ENCODE measurements at regions of chr11 and their contacts with region 1.

Region 1: DNA sequence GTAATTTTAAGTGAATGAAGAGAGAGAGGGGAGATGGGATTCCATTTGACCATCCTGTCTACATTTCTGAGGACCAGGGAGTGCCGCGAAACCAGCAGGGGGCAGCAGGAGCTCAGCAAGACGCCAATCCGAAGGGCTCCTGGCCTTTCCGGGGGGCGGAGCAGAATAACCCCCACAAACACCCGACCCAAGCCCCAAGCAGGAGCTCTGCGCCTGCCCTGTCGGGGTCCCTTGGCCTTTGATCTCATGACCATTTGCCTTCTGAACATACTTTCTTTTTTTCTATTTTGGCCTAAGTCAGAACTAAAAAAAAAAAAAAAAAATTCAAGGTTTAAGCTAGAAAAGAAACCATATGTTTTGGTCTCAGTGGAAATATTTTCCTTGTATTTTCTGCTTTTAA is 21.9 kb upstream of the SCN2B start:
- DNase-seq: peak; percentile 68 to 89 (median 88)
- ATAC-seq: peak; percentile 18
- H3K4me3 ChIP-seq: no peak overlapping the region
- H3K4me3 Mint-ChIP-seq: peak overlapping the region; percentile 27
- H3K27ac ChIP-seq: no peak overlapping the region
- H3K27ac Mint-ChIP-seq: peak overlapping the region; percentile 81
- H3K4me1 ChIP-seq: peaks cover 46% of the 10 kb centered on the region
- H3K4me1 Mint-ChIP-seq: peaks cover 11% of the 10 kb centered on the region
- H3K27me3 ChIP-seq: no peaks in the 10 kb centered on the region
- H3K27me3 Mint-ChIP-seq: no peaks in the 10 kb centered on the region
- CTCF ChIP-seq: peak; percentile 95

Region 2: GRCh38 chr11:118186346-118187107 is 11.8 kb before region 1 on chr11:
- CTCF ChIA-PET with region 1: interaction called, 15 read pairs
- POLR2A ChIA-PET with region 1: no interaction called
- intact Hi-C with region 1: no loop called
- DNase-seq: no peak
- ATAC-seq: no peak
- H3K4me3 ChIP-seq: no peak overlapping the region
- H3K4me3 Mint-ChIP-seq: no peak overlapping the region
- H3K27ac ChIP-seq: no peak overlapping the region
- H3K27ac Mint-ChIP-seq: no peak overlapping the region
- H3K4me1 ChIP-seq: no peaks in the 10 kb centered on the region
- H3K4me1 Mint-ChIP-seq: no peaks in the 10 kb centered on the region
- H3K27me3 ChIP-seq: peaks cover 0 to 2% of the 10 kb centered on the region in 2 experiments
- H3K27me3 Mint-ChIP-seq: peaks cover 16% of the 10 kb centered on the region
- CTCF ChIP-seq: no peak

Region 3: GRCh38 chr11:118240999-118241768 is 42.8 kb after region 1 on chr11:
- CTCF ChIA-PET with region 1: interaction called, 25 read pairs
- POLR2A ChIA-PET with region 1: interaction called, 8 read pairs
- intact Hi-C with region 1: loop called in 1 of 2 experiments (anchors 2 kb)
- DNase-seq: peak in 8 of 9 experiments; percentile 36 to 89 (median 69)
- ATAC-seq: peak; percentile 92
- H3K4me3 ChIP-seq: peak overlapping the region in 1 of 2 experiments; percentile 2
- H3K4me3 Mint-ChIP-seq: peak overlapping the region; percentile 56
- H3K27ac ChIP-seq: peak overlapping the region; percentile 22 to 74
- H3K27ac Mint-ChIP-seq: peak overlapping the region; percentile 85
- H3K4me1 ChIP-seq: peaks cover 35% of the 10 kb centered on the region
- H3K4me1 Mint-ChIP-seq: peaks cover 72% of the 10 kb centered on the region
- H3K27me3 ChIP-seq: no peaks in the 10 kb centered on the region
- H3K27me3 Mint-ChIP-seq: no peaks in the 10 kb centered on the region
- CTCF ChIP-seq: no peak

Region 4: DNA sequence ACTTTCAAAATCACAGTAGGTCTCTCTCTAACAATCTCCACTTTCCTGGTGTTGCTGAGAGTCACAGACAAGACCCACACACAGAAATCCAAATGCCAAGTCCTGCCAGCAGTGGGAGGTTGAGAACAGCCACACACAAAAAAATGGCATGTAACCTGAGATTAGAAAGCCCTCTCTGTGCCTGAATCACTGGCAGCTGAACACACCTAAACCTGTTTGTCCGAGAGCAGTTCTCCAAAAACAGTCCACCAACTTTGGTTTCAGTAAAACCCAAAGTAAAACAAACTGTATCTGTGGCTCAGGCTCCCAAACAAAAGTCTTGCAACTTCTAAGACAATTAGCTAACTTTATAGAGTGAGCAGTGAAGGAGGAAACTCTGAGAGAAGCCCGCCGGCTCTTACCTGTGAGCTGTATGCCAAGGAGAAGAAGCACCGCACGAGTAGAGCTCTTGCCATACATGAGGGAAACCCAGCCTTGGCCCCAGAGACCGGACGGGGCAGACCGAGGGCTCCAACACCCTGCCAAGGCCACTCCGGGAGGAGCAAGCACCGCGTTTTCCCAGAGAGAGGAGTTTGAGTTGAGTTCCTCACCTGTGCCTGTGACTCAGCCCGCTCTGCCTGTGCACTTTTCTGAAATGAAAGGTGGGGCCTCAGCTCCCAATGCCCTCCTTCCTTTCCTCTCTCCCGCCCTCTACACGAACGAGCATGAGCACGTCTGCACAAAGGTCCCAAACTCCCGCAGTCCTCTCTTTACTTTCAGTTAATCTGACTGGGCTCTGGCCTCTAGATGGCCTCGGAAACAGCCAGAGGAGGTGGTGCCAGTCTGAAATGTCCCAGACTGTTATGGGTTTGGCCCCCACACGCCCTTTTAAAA is 65.6 kb after region 1 on chr11 and contains the start of gene MPZL2:
- CTCF ChIA-PET with region 1: interaction called, 21 read pairs
- POLR2A ChIA-PET with region 1: interaction called, 5 read pairs
- intact Hi-C with region 1: loop called in 1 of 2 experiments (anchors 2 kb)
- DNase-seq: peak in 3 of 9 experiments; percentile 35 to 61 (median 40)
- ATAC-seq: peak; percentile 54
- H3K4me3 ChIP-seq: peak within 1 kb of the TSS; percentile 4 to 58
- H3K4me3 Mint-ChIP-seq: peak within 1 kb of the TSS; percentile 82
- H3K27ac ChIP-seq: no peak within 1 kb of the TSS
- H3K27ac Mint-ChIP-seq: peak within 1 kb of the TSS; percentile 83
- H3K4me1 ChIP-seq: peaks cover 38% of the 10 kb centered on the region
- H3K4me1 Mint-ChIP-seq: peaks cover 44% of the 10 kb centered on the region
- H3K27me3 ChIP-seq: no peaks in the 10 kb centered on the region
- H3K27me3 Mint-ChIP-seq: no peaks in the 10 kb centered on the region
- CTCF ChIP-seq: no peak
- total RNA-seq, gene MPZL2: 1.2 to 1.4 TPM

Region 5: DNA sequence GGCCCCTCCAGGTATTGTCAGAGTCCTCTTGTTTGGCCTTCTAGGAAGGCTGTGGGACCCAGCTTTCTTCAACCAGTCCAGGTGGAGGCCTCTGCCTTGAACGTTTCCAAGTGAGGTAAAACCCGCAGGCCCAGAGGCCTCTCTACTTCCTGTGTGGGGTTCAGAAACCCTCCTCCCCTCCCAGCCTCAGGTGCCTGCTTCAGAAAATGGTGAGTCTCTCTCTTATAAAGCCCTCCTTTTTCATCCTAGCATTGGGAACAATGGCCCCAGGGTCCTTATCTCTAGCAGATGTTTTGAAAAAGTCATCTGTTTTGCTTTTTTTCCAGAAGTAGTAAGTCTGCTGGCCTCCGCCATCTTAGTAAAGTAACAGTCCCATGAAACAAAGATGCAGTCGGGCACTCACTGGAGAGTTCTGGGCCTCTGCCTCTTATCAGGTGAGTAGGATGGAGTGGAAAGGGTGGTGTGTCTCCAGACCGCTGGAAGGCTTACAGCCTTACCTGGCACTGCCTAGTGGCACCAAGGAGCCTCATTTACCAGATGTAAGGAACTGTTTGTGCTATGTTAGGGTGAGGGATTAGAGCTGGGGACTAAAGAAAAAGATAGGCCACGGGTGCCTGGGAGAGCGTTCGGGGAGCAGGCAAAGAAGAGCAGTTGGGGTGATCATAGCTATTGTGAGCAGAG is 106.3 kb after region 1 on chr11 and contains the start of gene CD3E:
- CTCF ChIA-PET with region 1: interaction called, 21 read pairs
- POLR2A ChIA-PET with region 1: interaction called, 5 read pairs
- intact Hi-C with region 1: no loop called
- DNase-seq: peak; percentile 29 to 85 (median 73)
- ATAC-seq: peak; percentile 68
- H3K4me3 ChIP-seq: peak within 1 kb of the TSS; percentile 83 to 90
- H3K4me3 Mint-ChIP-seq: peak within 1 kb of the TSS; percentile 99
- H3K27ac ChIP-seq: peak within 1 kb of the TSS; percentile 76 to 86
- H3K27ac Mint-ChIP-seq: peak within 1 kb of the TSS; percentile 100
- H3K4me1 ChIP-seq: peaks cover 54% of the 10 kb centered on the region
- H3K4me1 Mint-ChIP-seq: peaks cover 82% of the 10 kb centered on the region
- H3K27me3 ChIP-seq: no peaks in the 10 kb centered on the region
- H3K27me3 Mint-ChIP-seq: no peaks in the 10 kb centered on the region
- CTCF ChIP-seq: no peak
- total RNA-seq, gene CD3E: 413 to 436 TPM